ENCODE measurements at regions of chr6 and their contacts with region 1.

Region 1: GRCh38 chr6:129498950-129499842 is 210.8 kb downstream of the ARHGAP18 start:
- DNase-seq: no peak
- H3K4me3 Mint-ChIP-seq: peak overlapping the region; percentile 46
- H3K27ac Mint-ChIP-seq: peak overlapping the region; percentile 50
- H3K4me1 Mint-ChIP-seq: peaks cover 55% of the 10 kb centered on the region
- H3K27me3 Mint-ChIP-seq: no peaks in the 10 kb centered on the region

Region 2: DNA sequence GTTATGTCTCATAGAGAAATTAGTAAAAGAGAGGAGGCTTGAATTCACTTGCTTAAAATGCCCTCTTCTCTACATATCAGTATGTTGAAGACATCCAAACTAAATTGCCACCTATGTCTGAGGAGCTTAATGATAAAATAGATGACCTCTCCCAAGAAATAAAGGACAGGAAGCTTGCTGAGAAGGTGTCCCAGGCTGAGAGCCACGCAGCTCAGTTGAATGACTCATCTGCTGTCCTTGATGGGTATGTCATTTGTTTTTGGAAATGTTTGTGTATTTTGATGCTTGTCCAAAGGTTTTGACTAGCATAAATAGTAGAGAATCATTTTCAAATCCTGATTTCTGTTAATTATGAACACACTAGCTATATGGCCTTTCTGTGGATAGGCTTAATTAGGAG is 97.0 kb before region 1 on chr6:
- CTCF ChIA-PET with region 1: no interaction called
- POLR2A ChIA-PET with region 1: no interaction called
- intact Hi-C with region 1: no loop called
- DNase-seq: no peak
- H3K4me3 Mint-ChIP-seq: no peak overlapping the region
- H3K27ac Mint-ChIP-seq: no peak overlapping the region
- H3K4me1 Mint-ChIP-seq: no peaks in the 10 kb centered on the region
- H3K27me3 Mint-ChIP-seq: no peaks in the 10 kb centered on the region

Region 3: DNA sequence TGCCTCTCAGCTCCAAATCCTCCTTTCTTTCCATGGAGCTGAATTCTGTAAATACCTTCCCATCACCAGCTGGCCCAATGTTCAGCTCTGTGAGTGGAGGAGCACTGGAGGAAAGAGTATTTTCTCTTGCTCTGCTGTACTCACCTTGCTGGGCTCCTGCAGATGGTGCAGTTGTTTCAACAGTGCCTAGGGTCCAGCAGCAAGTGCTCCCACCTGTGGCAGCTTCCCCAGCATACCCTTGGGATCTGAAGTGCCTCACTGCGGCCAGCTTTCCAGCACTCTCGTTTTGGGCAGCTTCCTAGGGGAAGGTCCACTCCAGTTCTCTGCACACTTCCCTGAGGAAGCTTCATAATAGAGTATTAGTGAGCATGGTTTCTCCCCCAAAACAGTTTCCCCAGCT is 39.8 kb after region 1 on chr6:
- CTCF ChIA-PET with region 1: no interaction called
- POLR2A ChIA-PET with region 1: no interaction called
- intact Hi-C with region 1: no loop called
- DNase-seq: no peak
- H3K4me3 Mint-ChIP-seq: no peak overlapping the region
- H3K27ac Mint-ChIP-seq: no peak overlapping the region
- H3K4me1 Mint-ChIP-seq: no peaks in the 10 kb centered on the region
- H3K27me3 Mint-ChIP-seq: peaks cover 2% of the 10 kb centered on the region

Region 4: DNA sequence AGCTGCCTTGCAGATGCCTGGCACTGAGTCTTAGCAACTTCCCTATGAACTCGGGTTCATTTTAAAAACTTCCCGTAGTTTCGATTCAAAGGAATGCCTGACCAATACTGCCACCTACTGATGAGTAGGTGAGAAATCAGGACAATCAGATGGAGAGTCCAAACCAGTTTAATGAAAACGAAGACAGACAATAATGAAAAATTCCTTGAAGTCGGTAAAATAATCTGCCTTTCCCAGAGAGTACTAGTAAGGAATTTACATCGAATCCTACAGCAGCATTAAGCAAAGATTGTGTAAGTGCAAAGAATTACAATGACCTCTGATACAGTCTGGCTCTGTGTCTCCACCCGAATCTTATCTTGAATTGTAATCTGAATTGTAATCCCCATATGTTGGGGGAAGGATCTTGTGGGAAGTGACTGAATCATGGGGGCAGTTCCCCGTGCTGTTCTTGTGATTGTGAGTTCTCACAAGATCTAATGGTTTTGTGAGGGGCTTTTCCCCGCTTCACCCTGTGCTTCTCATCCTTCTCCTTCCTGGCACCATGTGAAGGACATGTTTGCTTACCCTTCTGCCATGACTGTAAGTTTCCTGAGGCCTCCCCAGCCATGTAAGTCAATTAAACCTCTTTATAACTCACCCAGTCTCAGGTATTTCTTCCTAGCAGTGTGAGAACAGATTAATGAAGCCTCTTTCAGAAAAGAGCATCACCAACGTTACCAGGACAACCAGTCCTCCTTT is 76.4 kb after region 1 on chr6:
- CTCF ChIA-PET with region 1: interaction called, 18 read pairs
- POLR2A ChIA-PET with region 1: no interaction called
- intact Hi-C with region 1: loop called (anchors 2 kb)
- DNase-seq: no peak
- H3K4me3 Mint-ChIP-seq: no peak overlapping the region
- H3K27ac Mint-ChIP-seq: no peak overlapping the region
- H3K4me1 Mint-ChIP-seq: peaks cover 9% of the 10 kb centered on the region
- H3K27me3 Mint-ChIP-seq: no peaks in the 10 kb centered on the region

Region 5: DNA sequence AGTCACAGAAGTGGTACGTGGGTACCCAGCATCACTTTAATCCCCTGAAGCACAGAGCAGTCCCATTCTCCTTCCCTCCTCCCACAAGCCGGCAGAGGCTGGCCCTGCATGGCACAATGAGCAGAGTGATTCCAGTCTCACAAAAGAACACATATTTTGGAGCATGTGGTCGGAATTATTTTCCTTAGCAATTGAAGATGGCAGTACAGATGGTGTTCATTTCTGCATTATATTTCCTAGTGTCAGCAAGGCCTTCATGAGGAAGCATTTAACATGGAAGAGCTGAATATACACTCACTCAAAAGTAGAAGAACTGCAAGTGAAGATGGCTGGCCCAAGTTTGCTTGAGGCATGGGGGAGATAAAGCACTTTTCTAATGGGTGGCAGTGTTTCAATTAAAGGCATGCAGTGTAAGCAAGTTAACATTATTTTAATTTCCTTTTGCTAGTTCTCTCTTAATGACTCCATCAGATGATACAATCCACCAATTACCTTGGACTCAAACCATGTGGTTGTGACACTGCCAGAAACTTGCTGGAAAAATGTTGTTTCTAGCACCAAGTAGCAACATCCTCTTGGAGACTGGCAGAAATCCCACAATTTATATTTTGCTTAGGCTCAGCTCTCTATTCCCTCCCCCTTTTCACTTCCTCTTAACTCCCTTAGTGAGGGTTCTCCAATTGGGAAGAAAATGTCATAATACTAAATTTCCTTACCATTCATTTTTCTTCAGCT is 136.4 kb after region 1 on chr6:
- CTCF ChIA-PET with region 1: no interaction called
- POLR2A ChIA-PET with region 1: no interaction called
- intact Hi-C with region 1: no loop called
- DNase-seq: no peak
- H3K4me3 Mint-ChIP-seq: no peak overlapping the region
- H3K27ac Mint-ChIP-seq: no peak overlapping the region
- H3K4me1 Mint-ChIP-seq: peaks cover 9% of the 10 kb centered on the region
- H3K27me3 Mint-ChIP-seq: no peaks in the 10 kb centered on the region

Region 6: DNA sequence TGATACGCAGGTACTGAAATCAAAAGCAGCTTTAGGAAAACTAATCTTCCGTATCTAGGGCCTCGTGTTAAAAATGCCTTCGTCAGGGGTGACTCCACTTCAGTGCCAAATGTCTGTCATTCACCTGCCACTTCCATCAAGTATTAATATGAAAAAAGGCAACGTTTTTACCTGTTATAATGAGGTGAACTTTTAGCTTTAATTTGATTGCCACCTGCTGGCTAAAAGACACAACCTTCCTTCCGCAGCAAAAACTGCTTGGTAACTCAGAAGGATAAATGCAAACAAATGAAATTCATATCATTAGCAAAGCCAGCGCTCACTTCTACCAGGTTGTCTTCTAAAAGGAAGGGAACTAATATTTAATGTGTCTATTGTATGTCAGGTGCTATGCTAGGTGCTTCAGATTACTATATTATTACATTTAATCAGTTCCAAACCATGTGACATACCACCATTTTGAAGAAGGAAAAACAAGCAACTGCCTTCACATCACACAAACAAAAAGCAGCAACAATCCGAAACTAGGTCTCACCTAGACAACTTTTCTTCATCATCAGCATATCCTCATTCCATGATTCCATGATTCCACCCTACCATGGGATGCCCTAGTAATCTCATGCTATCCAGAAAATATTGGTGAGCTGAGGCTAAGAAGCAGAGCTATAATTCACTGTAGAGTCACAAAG is 231.4 kb after region 1 on chr6:
- CTCF ChIA-PET with region 1: interaction called, 13 read pairs
- POLR2A ChIA-PET with region 1: no interaction called
- intact Hi-C with region 1: loop called (anchors 1 kb)
- DNase-seq: peak; percentile 19
- H3K4me3 Mint-ChIP-seq: no peak overlapping the region
- H3K27ac Mint-ChIP-seq: no peak overlapping the region
- H3K4me1 Mint-ChIP-seq: peaks cover 11% of the 10 kb centered on the region
- H3K27me3 Mint-ChIP-seq: no peaks in the 10 kb centered on the region

Region 7: DNA sequence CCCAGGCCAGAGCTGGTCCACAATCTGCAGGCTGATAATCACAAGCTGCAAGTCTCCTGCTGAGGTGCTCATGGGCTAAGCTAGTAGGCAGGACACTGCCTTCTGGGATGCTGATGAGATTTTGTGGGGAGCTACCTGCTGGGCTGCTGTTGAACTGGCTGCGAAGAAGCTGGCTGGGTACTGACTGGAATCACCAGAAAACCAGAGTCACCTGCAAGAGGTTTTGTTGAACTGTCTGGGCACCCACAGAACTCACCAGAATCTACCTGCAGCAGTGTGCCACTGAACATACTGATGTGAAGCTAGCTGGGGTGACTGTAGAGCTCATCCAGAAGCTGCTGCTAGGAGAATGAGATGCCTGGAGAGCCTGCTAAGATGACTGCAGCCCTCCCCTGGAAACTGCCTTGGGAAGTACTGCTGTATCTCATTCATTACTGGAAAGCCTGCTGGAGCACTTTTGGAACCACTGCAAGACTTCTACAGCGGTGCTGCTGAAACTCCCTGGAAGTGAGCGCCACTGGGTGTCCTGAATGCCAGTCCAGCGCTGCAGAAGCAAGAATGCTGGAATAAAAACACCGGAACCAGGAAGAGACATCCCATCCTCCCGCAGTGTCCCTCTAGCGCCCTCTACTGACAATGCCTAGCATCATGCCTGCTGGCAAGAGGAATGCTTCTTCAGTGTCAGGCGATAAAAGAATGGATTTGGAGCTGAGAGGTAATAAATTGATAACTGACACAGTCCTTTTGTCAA is 275.7 kb after region 1 on chr6:
- CTCF ChIA-PET with region 1: interaction called, 19 read pairs
- POLR2A ChIA-PET with region 1: no interaction called
- intact Hi-C with region 1: no loop called
- DNase-seq: peak; percentile 64
- H3K4me3 Mint-ChIP-seq: no peak overlapping the region
- H3K27ac Mint-ChIP-seq: no peak overlapping the region
- H3K4me1 Mint-ChIP-seq: no peaks in the 10 kb centered on the region
- H3K27me3 Mint-ChIP-seq: no peaks in the 10 kb centered on the region

Region 8: DNA sequence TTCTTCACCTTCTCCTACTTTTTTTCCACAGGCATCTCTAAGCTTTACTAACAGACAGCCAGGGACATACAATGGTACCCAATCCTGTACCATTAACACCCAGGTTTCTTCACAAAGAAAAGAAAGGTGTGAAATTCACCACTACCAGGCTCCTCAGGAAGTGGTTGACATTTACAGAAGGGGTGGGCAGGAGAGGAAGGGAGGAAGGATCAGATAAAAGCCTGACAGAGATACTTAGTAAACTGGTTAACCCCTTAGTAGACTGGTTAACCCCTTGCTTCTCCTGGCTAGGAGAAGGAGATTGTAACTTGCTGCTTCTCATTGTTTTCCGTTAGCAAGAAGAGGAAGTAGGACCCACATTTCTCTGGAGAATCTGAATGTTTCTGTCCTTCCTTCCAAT is 716.3 kb after region 1 on chr6:
- CTCF ChIA-PET with region 1: no interaction called
- POLR2A ChIA-PET with region 1: no interaction called
- intact Hi-C with region 1: loop called (anchors 10 kb)
- DNase-seq: peak; percentile 38
- H3K4me3 Mint-ChIP-seq: peak overlapping the region; percentile 61
- H3K27ac Mint-ChIP-seq: peak overlapping the region; percentile 69
- H3K4me1 Mint-ChIP-seq: peaks cover 60% of the 10 kb centered on the region
- H3K27me3 Mint-ChIP-seq: no peaks in the 10 kb centered on the region

Measured in activated CD4-positive, alpha-beta memory T cell treated with anti-CD3 and anti-CD28 coated beads for 36 hours (primary cell).